ENCODE measurements at regions of chr6 and their contacts with region 1.

Region 1: GRCh38 chr6:29723262-29723665 is at the start of gene HLA-F:
- DNase-seq: peak; percentile 56 to 87 (median 79)
- ATAC-seq: peak; percentile 91
- H3K4me3 ChIP-seq: peak within 1 kb of the TSS; percentile 98
- H3K4me3 Mint-ChIP-seq: peak within 1 kb of the TSS; percentile 82 to 97 (median 95)
- H3K27ac ChIP-seq: peak within 1 kb of the TSS; percentile 100
- H3K27ac Mint-ChIP-seq: peak within 1 kb of the TSS; percentile 92 to 98 (median 95)
- H3K4me1 ChIP-seq: peaks cover 47 to 48% of the 10 kb centered on the region in 2 donors
- H3K4me1 Mint-ChIP-seq: peaks cover 32 to 63% (median 50%) of the 10 kb centered on the region in 7 donors
- H3K27me3 ChIP-seq: no peaks in the 10 kb centered on the region
- H3K27me3 Mint-ChIP-seq: no peaks in the 10 kb centered on the region
- total RNA-seq, gene HLA-F: 502 to 678 (median 522) TPM

Region 2: GRCh38 chr6:29216528-29216927 is 506.7 kb before region 1 on chr6:
- CTCF ChIA-PET with region 1: no interaction called
- POLR2A ChIA-PET with region 1: no interaction called
- intact Hi-C with region 1: no loop called
- DNase-seq: no peak
- ATAC-seq: no peak
- H3K4me3 ChIP-seq: no peak overlapping the region
- H3K4me3 Mint-ChIP-seq: no peak overlapping the region
- H3K27ac ChIP-seq: no peak overlapping the region
- H3K27ac Mint-ChIP-seq: no peak overlapping the region
- H3K4me1 ChIP-seq: no peaks in the 10 kb centered on the region
- H3K4me1 Mint-ChIP-seq: no peaks in the 10 kb centered on the region
- H3K27me3 ChIP-seq: peaks cover 0 to 2% of the 10 kb centered on the region in 2 donors
- H3K27me3 Mint-ChIP-seq: peaks cover 8 to 47% (median 34%) of the 10 kb centered on the region in 5 donors

Region 3: GRCh38 chr6:29705389-29706231 is 17.7 kb before region 1 on chr6:
- CTCF ChIA-PET with region 1: interaction called, 22 read pairs
- POLR2A ChIA-PET with region 1: interaction called, 46 read pairs
- intact Hi-C with region 1: loop called in 1 of 2 experiments (anchors 1 kb)
- DNase-seq: peak in 4 of 9 donors; percentile 41 to 60 (median 43)
- ATAC-seq: no peak
- H3K4me3 ChIP-seq: no peak overlapping the region
- H3K4me3 Mint-ChIP-seq: peak overlapping the region in 6 of 10 donors; percentile 20 to 77 (median 42)
- H3K27ac ChIP-seq: peak overlapping the region; percentile 2
- H3K27ac Mint-ChIP-seq: peak overlapping the region in 8 of 9 donors; percentile 16 to 95 (median 82)
- H3K4me1 ChIP-seq: peaks cover 47 to 54% of the 10 kb centered on the region in 2 donors
- H3K4me1 Mint-ChIP-seq: peaks cover 21 to 59% (median 51%) of the 10 kb centered on the region in 7 donors
- H3K27me3 ChIP-seq: no peaks in the 10 kb centered on the region
- H3K27me3 Mint-ChIP-seq: peaks cover 4 to 37% (median 8%) of the 10 kb centered on the region in 5 donors

Region 4: DNA sequence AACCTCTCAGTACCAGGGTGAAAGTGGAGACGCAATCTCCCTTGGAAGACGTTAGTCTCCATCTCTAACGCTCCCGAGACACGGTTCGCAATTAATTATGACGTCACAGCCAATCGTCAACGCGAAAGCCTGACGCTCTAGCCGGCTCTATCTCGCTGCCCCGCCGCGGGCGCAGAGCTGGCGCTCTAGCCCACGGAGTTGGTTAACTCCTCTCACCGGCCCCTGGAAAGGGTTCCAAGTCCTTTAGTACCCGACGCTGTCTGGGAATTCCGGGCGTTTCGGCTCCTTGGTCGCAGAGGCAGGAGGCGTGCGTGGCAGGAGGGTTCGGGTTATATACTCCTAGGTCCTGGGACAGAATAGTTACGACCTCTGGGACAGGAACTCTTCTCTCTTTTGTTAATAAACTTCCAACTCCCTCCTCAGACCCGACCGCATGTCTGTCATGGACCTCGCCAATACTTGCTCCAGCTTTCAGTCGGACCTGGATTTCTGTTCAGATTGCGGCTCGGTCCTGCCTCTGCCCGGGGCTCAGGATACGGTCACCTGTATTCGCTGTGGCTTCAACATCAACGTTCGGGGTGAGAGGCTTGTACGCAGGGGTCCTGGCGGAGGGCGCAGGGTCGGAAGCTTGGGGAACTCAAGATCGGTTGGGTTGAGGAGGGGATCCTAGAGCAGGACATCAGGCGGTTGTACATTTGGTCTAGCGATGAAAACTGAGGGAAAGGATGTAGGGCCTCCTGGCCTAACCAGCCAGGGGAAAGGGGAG is 338.0 kb after region 1 on chr6 and contains the start of gene POLR1H:
- CTCF ChIA-PET with region 1: no interaction called
- POLR2A ChIA-PET with region 1: no interaction called
- intact Hi-C with region 1: loop called (anchors 5 kb)
- DNase-seq: peak; percentile 69 to 93 (median 86)
- ATAC-seq: peak; percentile 93
- H3K4me3 ChIP-seq: peak within 1 kb of the TSS; percentile 95
- H3K4me3 Mint-ChIP-seq: peak within 1 kb of the TSS; percentile 93 to 99 (median 98)
- H3K27ac ChIP-seq: peak within 1 kb of the TSS; percentile 92
- H3K27ac Mint-ChIP-seq: peak within 1 kb of the TSS; percentile 95 to 99 (median 99)
- H3K4me1 ChIP-seq: peaks cover 24 to 26% of the 10 kb centered on the region in 2 donors
- H3K4me1 Mint-ChIP-seq: peaks cover 17 to 63% (median 55%) of the 10 kb centered on the region in 7 donors
- H3K27me3 ChIP-seq: no peaks in the 10 kb centered on the region
- H3K27me3 Mint-ChIP-seq: no peaks in the 10 kb centered on the region
- total RNA-seq, gene POLR1H: 27.3 to 66.8 (median 45.0) TPM

Measured in naive thymus-derived CD4-positive, alpha-beta T cell (primary cell).